Left colon (tissue), 2 donors: ENCODE measurements at regions of chr1 and their contacts with region 1.

Region 1: GRCh38 chr1:200488375-200489165 is 78.7 kb upstream of the ZNF281 start:
- DNase-seq: peak; percentile 34 to 52
- ATAC-seq: peak; percentile 90

Region 2: DNA sequence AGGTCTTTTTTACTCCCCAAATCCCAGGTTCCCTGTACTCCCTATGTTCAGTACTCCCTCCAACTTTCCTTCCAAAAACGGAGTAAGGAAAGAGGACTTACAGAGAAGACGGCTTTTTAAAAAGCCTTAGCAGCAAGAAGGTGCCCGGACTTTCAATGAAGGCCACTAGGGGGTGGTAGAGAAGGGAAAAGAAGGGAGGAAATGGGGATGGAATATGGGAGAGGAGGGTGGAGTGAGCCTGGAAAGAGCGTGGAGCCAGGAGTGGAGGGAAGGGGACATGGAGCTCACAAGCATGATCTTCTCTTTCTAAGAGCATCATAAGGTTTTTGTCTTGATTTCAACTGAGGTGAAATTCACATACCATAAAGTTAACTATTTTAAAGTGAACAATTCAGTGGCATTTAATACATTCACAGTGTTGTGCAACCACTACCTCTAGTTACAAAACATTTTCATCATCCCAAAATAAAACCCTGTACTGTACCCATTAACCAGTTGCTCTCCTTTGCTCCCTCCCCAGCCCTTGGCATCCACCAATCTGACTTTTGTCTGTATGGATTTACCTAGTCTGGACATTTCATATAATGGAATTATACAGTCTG is 208.7 kb before region 1 on chr1:
- intact Hi-C with region 1: loop called (anchors 5 to 10 kb)
- DNase-seq: peak; percentile 27 to 63
- ATAC-seq: peak; percentile 89